ENCODE measurements at regions of chrX and their contacts with region 1.

Region 1: DNA sequence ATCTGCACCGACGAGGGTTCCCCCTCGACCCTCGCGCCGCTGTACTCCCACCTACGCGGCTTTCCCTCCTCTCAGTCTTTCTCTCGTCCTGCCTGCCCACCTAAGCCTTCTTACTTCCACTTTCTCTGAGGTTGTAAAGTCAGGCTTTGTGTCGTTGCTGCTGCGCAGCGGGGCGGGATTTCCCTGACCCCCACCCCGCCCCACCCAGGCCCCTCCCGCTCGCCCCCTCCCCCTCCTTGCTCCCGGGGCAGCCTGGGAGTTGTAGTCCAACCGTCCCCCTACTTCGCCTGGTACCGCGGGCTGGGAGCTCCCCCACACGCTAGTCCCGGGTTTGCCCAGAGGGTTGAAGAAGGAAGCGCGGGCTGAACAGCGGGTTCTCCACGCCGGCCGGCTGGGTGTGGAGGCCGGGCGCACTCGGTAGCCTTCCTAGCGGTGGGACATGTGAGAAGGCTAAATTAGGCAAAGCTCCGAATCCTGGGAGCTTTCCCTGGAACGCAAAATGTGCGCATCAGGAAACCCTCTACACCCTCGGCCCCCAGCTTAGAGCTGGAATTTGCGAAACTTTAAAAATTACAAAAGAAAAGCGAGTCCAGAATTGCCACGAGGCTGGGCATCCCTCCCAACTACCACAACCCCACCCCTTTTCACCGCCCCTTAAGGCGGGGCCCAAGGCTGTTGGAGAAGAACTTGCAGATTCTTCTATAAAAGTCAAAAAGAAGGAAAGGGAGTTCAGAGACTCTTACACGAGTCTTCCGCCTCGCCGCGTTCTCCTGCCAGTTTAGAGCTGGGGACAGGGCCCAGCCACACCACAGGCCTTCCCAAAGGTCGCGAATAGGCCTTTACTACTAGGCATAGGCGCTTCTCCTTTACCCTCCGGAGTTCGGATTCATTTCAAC is at the start of gene ATP11C:
- DNase-seq: peak; percentile 69 to 91 (median 81)
- ATAC-seq: peak; percentile 83
- H3K4me3 ChIP-seq: peak within 1 kb of the TSS; percentile 71 to 86
- H3K4me3 Mint-ChIP-seq: peak within 1 kb of the TSS; percentile 92
- H3K27ac ChIP-seq: peak within 1 kb of the TSS; percentile 83 to 88
- H3K27ac Mint-ChIP-seq: peak within 1 kb of the TSS; percentile 98
- H3K4me1 ChIP-seq: peaks cover 10% of the 10 kb centered on the region
- H3K4me1 Mint-ChIP-seq: peaks cover 27% of the 10 kb centered on the region
- H3K27me3 ChIP-seq: no peaks in the 10 kb centered on the region
- H3K27me3 Mint-ChIP-seq: no peaks in the 10 kb centered on the region
- CTCF ChIP-seq: no peak
- total RNA-seq, gene ATP11C: 14.7 to 18.4 TPM

Region 2: GRCh38 chrX:138886769-138887168 is 1046.4 kb before region 1 on chrX:
- CTCF ChIA-PET with region 1: no interaction called
- POLR2A ChIA-PET with region 1: no interaction called
- intact Hi-C with region 1: no loop called
- DNase-seq: no peak
- ATAC-seq: no peak
- H3K4me3 ChIP-seq: no peak overlapping the region
- H3K4me3 Mint-ChIP-seq: no peak overlapping the region
- H3K27ac ChIP-seq: no peak overlapping the region
- H3K27ac Mint-ChIP-seq: no peak overlapping the region
- H3K4me1 ChIP-seq: no peaks in the 10 kb centered on the region
- H3K4me1 Mint-ChIP-seq: no peaks in the 10 kb centered on the region
- H3K27me3 ChIP-seq: no peaks in the 10 kb centered on the region
- H3K27me3 Mint-ChIP-seq: no peaks in the 10 kb centered on the region
- CTCF ChIP-seq: no peak

Region 3: DNA sequence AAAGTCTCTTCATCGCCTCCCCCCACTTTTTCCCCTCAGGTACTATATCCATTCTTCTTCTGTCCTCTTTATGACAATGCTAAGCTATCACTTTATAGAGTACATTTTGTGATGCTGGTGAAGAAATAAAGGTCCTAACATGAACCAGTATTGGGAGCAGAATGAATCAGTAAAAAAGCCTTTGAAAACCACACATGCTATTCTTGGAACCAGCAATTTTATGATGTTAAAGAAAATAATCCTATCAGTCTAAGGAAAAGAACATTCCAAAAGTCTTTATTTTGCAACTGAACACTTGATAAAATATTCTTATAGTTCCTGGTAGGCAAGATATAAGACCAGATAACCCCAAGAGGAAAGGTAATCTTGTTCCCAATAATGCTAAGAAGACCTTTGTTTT is 117.4 kb before region 1 on chrX:
- CTCF ChIA-PET with region 1: no interaction called
- POLR2A ChIA-PET with region 1: no interaction called
- intact Hi-C with region 1: loop called in 1 of 2 experiments (anchors 5 kb)
- DNase-seq: no peak
- ATAC-seq: no peak
- H3K4me3 ChIP-seq: no peak overlapping the region
- H3K4me3 Mint-ChIP-seq: no peak overlapping the region
- H3K27ac ChIP-seq: no peak overlapping the region
- H3K27ac Mint-ChIP-seq: no peak overlapping the region
- H3K4me1 ChIP-seq: peaks cover 25% of the 10 kb centered on the region
- H3K4me1 Mint-ChIP-seq: peaks cover 32% of the 10 kb centered on the region
- H3K27me3 ChIP-seq: no peaks in the 10 kb centered on the region
- H3K27me3 Mint-ChIP-seq: no peaks in the 10 kb centered on the region
- CTCF ChIP-seq: no peak

Region 4: GRCh38 chrX:139890991-139891700 is 42.0 kb before region 1 on chrX:
- CTCF ChIA-PET with region 1: no interaction called
- POLR2A ChIA-PET with region 1: no interaction called
- intact Hi-C with region 1: loop called in 1 of 2 experiments (anchors 2 kb)
- DNase-seq: no peak
- ATAC-seq: no peak
- H3K4me3 ChIP-seq: no peak overlapping the region
- H3K4me3 Mint-ChIP-seq: no peak overlapping the region
- H3K27ac ChIP-seq: no peak overlapping the region
- H3K27ac Mint-ChIP-seq: no peak overlapping the region
- H3K4me1 ChIP-seq: no peaks in the 10 kb centered on the region
- H3K4me1 Mint-ChIP-seq: peaks cover 28% of the 10 kb centered on the region
- H3K27me3 ChIP-seq: no peaks in the 10 kb centered on the region
- H3K27me3 Mint-ChIP-seq: no peaks in the 10 kb centered on the region
- CTCF ChIP-seq: no peak

Region 5: GRCh38 chrX:140050906-140051305 is 117.8 kb after region 1 on chrX:
- CTCF ChIA-PET with region 1: no interaction called
- POLR2A ChIA-PET with region 1: no interaction called
- intact Hi-C with region 1: no loop called
- DNase-seq: no peak
- ATAC-seq: no peak
- H3K4me3 ChIP-seq: no peak overlapping the region
- H3K4me3 Mint-ChIP-seq: no peak overlapping the region
- H3K27ac ChIP-seq: no peak overlapping the region
- H3K27ac Mint-ChIP-seq: no peak overlapping the region
- H3K4me1 ChIP-seq: no peaks in the 10 kb centered on the region
- H3K4me1 Mint-ChIP-seq: no peaks in the 10 kb centered on the region
- H3K27me3 ChIP-seq: no peaks in the 10 kb centered on the region
- H3K27me3 Mint-ChIP-seq: peaks cover 4% of the 10 kb centered on the region
- CTCF ChIP-seq: no peak